T-cell (primary cell): ENCODE measurements at regions of chr11 and their contacts with region 1.

Region 1: GRCh38 chr11:704781-705645 is 1.0 kb upstream of the EPS8L2 start:
- DNase-seq: no peak
- ATAC-seq: peak in 1 of 4 experiments; percentile 5
- H3K4me3 ChIP-seq: no peak overlapping the region
- H3K4me3 Mint-ChIP-seq: peak overlapping the region in 2 of 3 donors; percentile 44 to 54
- H3K27ac ChIP-seq: no peak overlapping the region
- H3K27ac Mint-ChIP-seq: no peak overlapping the region
- H3K4me1 ChIP-seq: peaks cover 0 to 28% of the 10 kb centered on the region in 2 experiments
- H3K4me1 Mint-ChIP-seq: peaks cover 0 to 11% (median 2%) of the 10 kb centered on the region in 3 donors
- H3K27me3 ChIP-seq: peaks cover 2 to 42% of the 10 kb centered on the region in 2 experiments
- H3K27me3 Mint-ChIP-seq: peaks cover 9 to 16% of the 10 kb centered on the region in 2 donors

Region 2: GRCh38 chr11:520428-521176 is 184.4 kb before region 1 on chr11:
- CTCF ChIA-PET with region 1: no interaction called
- POLR2A ChIA-PET with region 1: no interaction called
- DNase-seq: no peak
- ATAC-seq: no peak
- H3K4me3 ChIP-seq: no peak overlapping the region
- H3K4me3 Mint-ChIP-seq: no peak overlapping the region
- H3K27ac ChIP-seq: no peak overlapping the region
- H3K27ac Mint-ChIP-seq: no peak overlapping the region
- H3K4me1 ChIP-seq: peaks cover 2 to 7% of the 10 kb centered on the region in 2 experiments
- H3K4me1 Mint-ChIP-seq: peaks cover 4 to 7% (median 5%) of the 10 kb centered on the region in 3 donors
- H3K27me3 ChIP-seq: no peaks in the 10 kb centered on the region
- H3K27me3 Mint-ChIP-seq: no peaks in the 10 kb centered on the region

Region 3: GRCh38 chr11:587978-588380 is 117.0 kb before region 1 on chr11:
- CTCF ChIA-PET with region 1: no interaction called
- POLR2A ChIA-PET with region 1: no interaction called
- DNase-seq: peak; percentile 43 to 89 (median 67)
- ATAC-seq: peak; percentile 92 to 98 (median 94)
- H3K4me3 ChIP-seq: no peak overlapping the region
- H3K4me3 Mint-ChIP-seq: peak overlapping the region; percentile 69 to 80 (median 77)
- H3K27ac ChIP-seq: peak overlapping the region; percentile 68
- H3K27ac Mint-ChIP-seq: peak overlapping the region; percentile 99
- H3K4me1 ChIP-seq: peaks cover 5 to 32% of the 10 kb centered on the region in 2 experiments
- H3K4me1 Mint-ChIP-seq: peaks cover 28 to 34% (median 33%) of the 10 kb centered on the region in 3 donors
- H3K27me3 ChIP-seq: no peaks in the 10 kb centered on the region
- H3K27me3 Mint-ChIP-seq: no peaks in the 10 kb centered on the region

Region 4: GRCh38 chr11:747158-748006 is 42.4 kb after region 1 on chr11 and contains the start of gene TALDO1:
- CTCF ChIA-PET with region 1: no interaction called
- POLR2A ChIA-PET with region 1: interaction called in 1 of 2 experiments, 11 read pairs
- DNase-seq: peak; percentile 32 to 83 (median 59)
- ATAC-seq: peak; percentile 85 to 91 (median 90)
- H3K4me3 ChIP-seq: peak within 1 kb of the TSS; percentile 48 to 59
- H3K4me3 Mint-ChIP-seq: peak within 1 kb of the TSS; percentile 80 to 86 (median 82)
- H3K27ac ChIP-seq: no peak within 1 kb of the TSS
- H3K27ac Mint-ChIP-seq: peak within 1 kb of the TSS; percentile 74 to 79
- H3K4me1 ChIP-seq: peaks cover 0 to 26% of the 10 kb centered on the region in 2 experiments
- H3K4me1 Mint-ChIP-seq: peaks cover 21 to 24% (median 21%) of the 10 kb centered on the region in 3 donors
- H3K27me3 ChIP-seq: no peaks in the 10 kb centered on the region
- H3K27me3 Mint-ChIP-seq: no peaks in the 10 kb centered on the region
- total RNA-seq, gene TALDO1: 60.5 to 106 (median 102) TPM